ENCODE measurements at regions of chrX and their contacts with region 1.

Region 1: DNA sequence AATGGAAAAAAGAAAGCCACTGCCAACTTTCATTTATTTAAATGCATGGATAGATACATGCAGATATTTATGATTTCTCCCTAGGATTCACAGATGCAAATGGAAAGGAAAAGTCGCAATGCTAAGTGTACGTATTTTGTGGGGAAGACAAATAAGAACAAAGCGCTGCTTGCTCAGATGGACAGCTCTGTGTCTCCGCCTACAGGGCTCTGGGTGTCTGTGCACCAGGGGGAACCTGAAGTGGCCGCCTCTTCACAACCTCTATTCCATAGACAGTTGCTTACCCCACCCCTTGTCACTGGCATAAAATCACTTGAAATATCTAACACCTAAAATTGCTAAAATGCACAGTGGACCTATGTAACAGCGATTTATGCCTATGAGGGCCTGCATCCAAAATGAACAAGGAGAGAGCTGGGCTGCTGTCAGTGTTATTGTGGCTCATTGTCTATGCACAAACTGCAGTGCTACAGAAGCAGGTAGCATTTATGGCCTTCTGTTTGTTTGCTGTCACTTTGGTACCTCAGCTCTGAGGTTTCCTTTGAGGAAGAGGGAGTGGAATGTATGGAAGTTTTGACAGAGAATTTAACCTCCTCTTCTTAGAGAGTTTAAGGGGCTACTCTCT is 58.6 kb upstream of the PAGE1 start:
- DNase-seq: peak; percentile 10 to 20
- ATAC-seq: peak in 1 of 2 donors; percentile 60
- H3K4me3 ChIP-seq: no peak overlapping the region
- H3K27ac ChIP-seq: no peak overlapping the region
- H3K4me1 ChIP-seq: no peaks in the 10 kb centered on the region
- H3K27me3 ChIP-seq: no peaks in the 10 kb centered on the region
- CTCF ChIP-seq: peak; percentile 53 to 73 (median 62)
- POLR2A ChIP-seq: no peak

Region 2: GRCh38 chrX:49627086-49627777 is 127.1 kb before region 1 on chrX:
- in situ Hi-C with region 1: no loop called
- intact Hi-C with region 1: loop called (anchors 5 kb)
- DNase-seq: peak in 1 of 2 donors; percentile 33
- ATAC-seq: no peak
- H3K4me3 ChIP-seq: peak overlapping the region in 2 of 4 donors; percentile 10 to 36
- H3K27ac ChIP-seq: no peak overlapping the region
- H3K4me1 ChIP-seq: no peaks in the 10 kb centered on the region
- H3K27me3 ChIP-seq: no peaks in the 10 kb centered on the region
- CTCF ChIP-seq: peak in 2 of 5 experiments; percentile 41 to 50
- POLR2A ChIP-seq: no peak

Measured in gastrocnemius medialis (tissue), 4 donors.